Activated T-helper 1 cell treated with anti-CD3 and anti-CD28 coated beads, Interleukin-12 subunit alpha, Interleukin-12 subunit beta, Interleukin-2, Interleukin-4 antibody, amounts not matched to agents 30 ng/mL and 10 ng/mL and 1 ng/mL, durations not matched to agents 14 hours and 24 hours and 36 hours (primary cell): ENCODE measurements at regions of chr15 and their contacts with region 1.

Region 1: GRCh38 chr15:92917606-92918407 is 17.7 kb downstream of the CHD2 start:
- DNase-seq: peak; percentile 86
- H3K4me3 Mint-ChIP-seq: peak overlapping the region; percentile 53
- H3K27ac Mint-ChIP-seq: peak overlapping the region; percentile 30
- H3K4me1 Mint-ChIP-seq: peaks cover 91% of the 10 kb centered on the region
- H3K27me3 Mint-ChIP-seq: no peaks in the 10 kb centered on the region

Region 2: GRCh38 chr15:92797168-92797951 is 120.4 kb before region 1 on chr15:
- intact Hi-C with region 1: loop called (anchors 1 kb)
- DNase-seq: no peak
- H3K4me3 Mint-ChIP-seq: no peak overlapping the region
- H3K27ac Mint-ChIP-seq: peak overlapping the region; percentile 58
- H3K4me1 Mint-ChIP-seq: peaks cover 17% of the 10 kb centered on the region
- H3K27me3 Mint-ChIP-seq: no peaks in the 10 kb centered on the region

Region 3: DNA sequence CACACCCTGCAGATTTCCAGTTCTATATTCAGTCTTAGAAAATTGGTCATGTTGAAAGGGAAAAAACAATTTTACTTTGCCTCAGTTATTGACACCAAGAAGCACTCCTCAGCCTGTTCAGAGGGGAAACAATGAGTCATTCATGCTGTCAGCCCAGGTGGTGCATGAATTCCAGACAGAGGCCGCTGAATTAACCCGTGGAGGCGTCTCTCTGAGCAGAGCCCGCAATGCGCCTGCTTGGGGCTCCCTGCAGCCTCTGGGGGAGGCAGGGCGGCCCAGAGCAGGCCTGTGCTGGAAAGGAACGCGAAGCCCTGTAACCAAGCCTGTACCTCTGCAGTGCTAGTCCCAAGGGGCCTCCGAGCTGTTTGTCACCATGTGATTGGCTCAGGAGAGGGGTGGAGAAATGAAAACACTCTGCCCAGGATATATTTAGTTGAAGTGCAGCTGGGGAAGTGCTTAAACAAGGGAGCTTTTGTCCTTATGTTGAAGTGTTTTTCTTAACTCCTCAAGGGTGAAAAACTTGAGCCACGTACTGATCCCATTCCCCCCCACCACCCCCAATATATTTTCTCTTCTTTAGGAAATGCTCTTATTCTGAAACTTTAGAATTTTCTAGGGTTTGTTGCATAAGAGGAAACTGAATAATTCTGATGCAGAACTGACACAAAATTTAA is 86.0 kb before region 1 on chr15:
- intact Hi-C with region 1: loop called (anchors 1 kb)
- DNase-seq: peak; percentile 90
- H3K4me3 Mint-ChIP-seq: peak overlapping the region; percentile 74
- H3K27ac Mint-ChIP-seq: peak overlapping the region; percentile 99
- H3K4me1 Mint-ChIP-seq: peaks cover 50% of the 10 kb centered on the region
- H3K27me3 Mint-ChIP-seq: no peaks in the 10 kb centered on the region

Region 4: DNA sequence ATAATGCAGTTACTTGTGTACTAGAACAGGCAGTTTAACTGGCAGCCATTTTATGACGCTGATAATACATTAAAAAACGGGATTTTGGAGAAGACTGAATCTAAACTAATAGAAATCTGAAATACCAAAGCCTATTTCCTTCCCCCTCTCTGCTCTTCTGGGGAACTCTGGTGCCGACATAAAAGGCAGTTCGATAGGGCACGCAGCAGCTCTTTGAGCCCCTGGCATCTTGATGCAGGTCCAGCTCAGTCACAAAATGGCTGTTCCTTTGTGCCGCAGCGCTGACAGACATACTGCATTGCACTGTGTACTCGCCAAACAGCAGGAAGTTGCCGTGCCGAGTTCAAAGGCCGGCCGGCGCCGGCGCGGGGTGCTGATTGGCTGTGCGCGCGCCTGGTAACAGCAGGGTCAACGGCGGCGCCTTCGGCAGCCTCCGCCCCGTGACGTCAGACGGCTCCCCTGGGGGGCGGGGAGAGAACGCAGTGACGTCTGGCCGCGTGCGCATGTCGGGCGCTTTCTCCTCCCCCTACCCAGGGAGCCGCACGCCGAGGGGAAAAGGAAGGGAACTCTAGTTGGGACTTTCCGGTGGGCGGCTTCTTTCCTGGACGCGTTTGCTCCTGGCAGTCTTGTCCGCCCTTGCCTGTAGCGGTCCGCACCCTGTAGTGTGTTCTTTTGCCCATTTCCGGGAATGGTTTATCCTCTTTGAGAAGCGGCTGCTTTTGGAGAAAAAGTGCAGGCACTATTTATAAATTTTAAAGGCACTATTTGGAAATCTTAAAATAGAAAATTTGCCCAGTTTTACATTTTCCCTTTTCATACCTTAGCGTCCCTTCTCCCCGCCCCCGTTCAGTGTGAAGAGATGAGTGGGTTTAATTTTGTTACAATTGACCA is 13.6 kb before region 1 on chr15:
- intact Hi-C with region 1: loop called (anchors 1 kb)
- DNase-seq: peak; percentile 99
- H3K4me3 Mint-ChIP-seq: peak overlapping the region; percentile 93
- H3K27ac Mint-ChIP-seq: peak overlapping the region; percentile 100
- H3K4me1 Mint-ChIP-seq: peaks cover 67% of the 10 kb centered on the region
- H3K27me3 Mint-ChIP-seq: no peaks in the 10 kb centered on the region

Region 5: DNA sequence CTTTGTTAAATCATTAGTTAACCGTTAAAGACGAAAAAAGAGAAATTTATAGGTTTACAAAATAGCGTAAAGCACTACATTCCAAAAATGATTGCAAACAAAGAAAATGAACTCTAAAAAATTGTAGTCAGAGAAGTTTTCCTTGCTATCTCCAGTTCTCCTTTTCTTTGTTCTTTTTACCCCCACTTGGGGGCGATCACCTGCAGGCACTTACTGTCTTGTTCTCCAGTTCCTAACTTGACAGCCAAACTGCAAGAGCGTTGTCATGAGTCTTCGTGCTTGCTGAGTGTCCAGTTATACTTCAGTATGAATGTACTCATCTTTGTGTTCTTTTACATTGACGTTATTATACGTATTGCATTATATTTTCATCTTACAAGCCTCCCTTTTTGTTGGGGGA is 36.8 kb after region 1 on chr15:
- intact Hi-C with region 1: loop called (anchors 5 kb)
- DNase-seq: no peak
- H3K4me3 Mint-ChIP-seq: no peak overlapping the region
- H3K27ac Mint-ChIP-seq: no peak overlapping the region
- H3K4me1 Mint-ChIP-seq: peaks cover 43% of the 10 kb centered on the region
- H3K27me3 Mint-ChIP-seq: no peaks in the 10 kb centered on the region